ENCODE measurements at regions of chr7 and their contacts with region 1.

Region 1: GRCh38 chr7:154927624-154928143 is 75.2 kb downstream of the PAXIP1 start:
- DNase-seq: peak; percentile 88
- ATAC-seq: peak; percentile 54
- H3K4me3 ChIP-seq: peak overlapping the region; percentile 64 to 98 (median 83)
- H3K4me3 Mint-ChIP-seq: peak overlapping the region; percentile 97
- H3K27ac ChIP-seq: peak overlapping the region; percentile 83 to 94
- H3K27ac Mint-ChIP-seq: peak overlapping the region; percentile 96
- H3K4me1 ChIP-seq: peaks cover 12 to 14% of the 10 kb centered on the region in 2 donors
- H3K4me1 Mint-ChIP-seq: peaks cover 31% of the 10 kb centered on the region
- H3K27me3 ChIP-seq: no peaks in the 10 kb centered on the region
- H3K27me3 Mint-ChIP-seq: no peaks in the 10 kb centered on the region
- CTCF ChIP-seq: peak; percentile 83

Region 2: GRCh38 chr7:154913638-154914312 is 13.9 kb before region 1 on chr7:
- CTCF ChIA-PET with region 1: interaction called, 52 read pairs
- POLR2A ChIA-PET with region 1: no interaction called
- intact Hi-C with region 1: loop called (anchors 1 kb)
- DNase-seq: peak; percentile 86
- ATAC-seq: peak; percentile 97
- H3K4me3 ChIP-seq: peak overlapping the region in 4 of 5 experiments; percentile 38 to 64 (median 50)
- H3K4me3 Mint-ChIP-seq: peak overlapping the region; percentile 92
- H3K27ac ChIP-seq: no peak overlapping the region
- H3K27ac Mint-ChIP-seq: no peak overlapping the region
- H3K4me1 ChIP-seq: peaks cover 7 to 9% of the 10 kb centered on the region in 2 donors
- H3K4me1 Mint-ChIP-seq: peaks cover 5% of the 10 kb centered on the region
- H3K27me3 ChIP-seq: peaks cover 0 to 20% (median 9%) of the 10 kb centered on the region in 4 experiments
- H3K27me3 Mint-ChIP-seq: peaks cover 45% of the 10 kb centered on the region
- CTCF ChIP-seq: peak; percentile 96

Region 3: GRCh38 chr7:155003376-155004214 is 75.9 kb after region 1 on chr7:
- CTCF ChIA-PET with region 1: interaction called, 75 read pairs
- POLR2A ChIA-PET with region 1: interaction called, 5 read pairs
- intact Hi-C with region 1: loop called (anchors 1 kb)
- DNase-seq: no peak
- ATAC-seq: peak; percentile 86
- H3K4me3 ChIP-seq: peak overlapping the region; percentile 57 to 98 (median 89)
- H3K4me3 Mint-ChIP-seq: peak overlapping the region; percentile 95
- H3K27ac ChIP-seq: peak overlapping the region; percentile 58 to 80
- H3K27ac Mint-ChIP-seq: peak overlapping the region; percentile 93
- H3K4me1 ChIP-seq: peaks cover 14 to 18% of the 10 kb centered on the region in 2 donors
- H3K4me1 Mint-ChIP-seq: peaks cover 15% of the 10 kb centered on the region
- H3K27me3 ChIP-seq: no peaks in the 10 kb centered on the region
- H3K27me3 Mint-ChIP-seq: no peaks in the 10 kb centered on the region
- CTCF ChIP-seq: no peak

Region 4: GRCh38 chr7:155205368-155206317 is 278.0 kb after region 1 on chr7:
- CTCF ChIA-PET with region 1: interaction called, 12 read pairs
- POLR2A ChIA-PET with region 1: no interaction called
- intact Hi-C with region 1: loop called (anchors 1 kb)
- DNase-seq: peak; percentile 91
- ATAC-seq: peak; percentile 84
- H3K4me3 ChIP-seq: peak overlapping the region; percentile 33 to 61 (median 55)
- H3K4me3 Mint-ChIP-seq: peak overlapping the region; percentile 88
- H3K27ac ChIP-seq: peak overlapping the region; percentile 42 to 87
- H3K27ac Mint-ChIP-seq: peak overlapping the region; percentile 89
- H3K4me1 ChIP-seq: peaks cover 19 to 23% of the 10 kb centered on the region in 2 donors
- H3K4me1 Mint-ChIP-seq: peaks cover 20% of the 10 kb centered on the region
- H3K27me3 ChIP-seq: no peaks in the 10 kb centered on the region
- H3K27me3 Mint-ChIP-seq: no peaks in the 10 kb centered on the region
- CTCF ChIP-seq: no peak

Region 5: DNA sequence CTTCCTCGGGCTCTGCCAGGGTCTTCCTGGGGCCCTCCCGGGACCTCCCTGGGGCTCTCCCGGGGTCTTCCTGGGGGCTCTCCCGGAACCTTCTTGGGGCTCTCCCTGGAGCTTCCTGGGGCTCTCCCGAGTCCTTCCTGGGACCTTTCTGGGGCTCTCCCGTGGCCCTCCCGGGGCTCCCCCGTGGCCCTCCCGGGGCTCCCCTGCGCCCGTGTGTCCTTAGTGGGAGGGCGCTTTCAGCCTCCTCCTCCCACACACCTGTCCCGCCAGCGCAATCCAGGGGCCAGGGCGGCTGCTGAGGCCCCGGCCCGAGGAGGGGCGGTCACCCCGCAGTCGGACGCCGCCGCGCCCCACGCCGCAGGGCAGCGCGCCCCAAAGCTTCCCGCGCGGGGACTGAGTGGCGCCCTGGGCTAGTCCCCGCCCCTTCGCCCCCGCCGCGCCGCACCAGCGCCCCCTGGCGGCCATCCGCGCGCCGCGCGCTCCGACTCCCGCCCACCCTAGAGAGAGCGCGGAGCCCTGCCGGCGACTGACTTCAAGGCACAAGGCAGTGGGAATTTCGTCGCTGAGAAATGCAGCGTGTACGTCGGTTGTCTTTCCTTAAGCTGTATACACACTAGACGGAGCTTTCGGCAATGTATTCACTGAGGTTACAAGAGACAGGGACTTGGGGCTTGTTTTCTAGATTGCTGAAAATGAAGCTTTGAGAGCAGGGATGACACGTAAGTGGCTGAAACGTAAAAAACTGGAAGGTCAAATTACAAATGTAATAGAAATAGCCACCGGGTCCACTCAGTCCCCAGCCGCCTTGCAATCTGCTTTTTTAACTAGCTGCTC is 417.1 kb after region 1 on chr7:
- CTCF ChIA-PET with region 1: interaction called, 66 read pairs
- POLR2A ChIA-PET with region 1: no interaction called
- intact Hi-C with region 1: loop called (anchors 1 kb)
- DNase-seq: peak; percentile 88
- ATAC-seq: peak; percentile 91
- H3K4me3 ChIP-seq: peak overlapping the region in 4 of 5 experiments; percentile 25 to 58 (median 52)
- H3K4me3 Mint-ChIP-seq: peak overlapping the region; percentile 82
- H3K27ac ChIP-seq: no peak overlapping the region
- H3K27ac Mint-ChIP-seq: peak overlapping the region; percentile 71
- H3K4me1 ChIP-seq: peaks cover 12 to 13% of the 10 kb centered on the region in 2 donors
- H3K4me1 Mint-ChIP-seq: peaks cover 5% of the 10 kb centered on the region
- H3K27me3 ChIP-seq: peaks cover 0 to 26% (median 6%) of the 10 kb centered on the region in 4 experiments
- H3K27me3 Mint-ChIP-seq: peaks cover 4% of the 10 kb centered on the region
- CTCF ChIP-seq: peak; percentile 89

Region 6: GRCh38 chr7:155598810-155599210 is 671.1 kb after region 1 on chr7:
- CTCF ChIA-PET with region 1: interaction called, 17 read pairs
- POLR2A ChIA-PET with region 1: no interaction called
- intact Hi-C with region 1: loop called (anchors 5 kb)
- DNase-seq: peak; percentile 81
- ATAC-seq: peak; percentile 80
- H3K4me3 ChIP-seq: no peak overlapping the region
- H3K4me3 Mint-ChIP-seq: no peak overlapping the region
- H3K27ac ChIP-seq: no peak overlapping the region
- H3K27ac Mint-ChIP-seq: no peak overlapping the region
- H3K4me1 ChIP-seq: peaks cover 3 to 4% of the 10 kb centered on the region in 2 donors
- H3K4me1 Mint-ChIP-seq: peaks cover 3% of the 10 kb centered on the region
- H3K27me3 ChIP-seq: peaks cover 0 to 10% (median 8%) of the 10 kb centered on the region in 4 experiments
- H3K27me3 Mint-ChIP-seq: peaks cover 29% of the 10 kb centered on the region
- CTCF ChIP-seq: peak; percentile 99

Region 7: DNA sequence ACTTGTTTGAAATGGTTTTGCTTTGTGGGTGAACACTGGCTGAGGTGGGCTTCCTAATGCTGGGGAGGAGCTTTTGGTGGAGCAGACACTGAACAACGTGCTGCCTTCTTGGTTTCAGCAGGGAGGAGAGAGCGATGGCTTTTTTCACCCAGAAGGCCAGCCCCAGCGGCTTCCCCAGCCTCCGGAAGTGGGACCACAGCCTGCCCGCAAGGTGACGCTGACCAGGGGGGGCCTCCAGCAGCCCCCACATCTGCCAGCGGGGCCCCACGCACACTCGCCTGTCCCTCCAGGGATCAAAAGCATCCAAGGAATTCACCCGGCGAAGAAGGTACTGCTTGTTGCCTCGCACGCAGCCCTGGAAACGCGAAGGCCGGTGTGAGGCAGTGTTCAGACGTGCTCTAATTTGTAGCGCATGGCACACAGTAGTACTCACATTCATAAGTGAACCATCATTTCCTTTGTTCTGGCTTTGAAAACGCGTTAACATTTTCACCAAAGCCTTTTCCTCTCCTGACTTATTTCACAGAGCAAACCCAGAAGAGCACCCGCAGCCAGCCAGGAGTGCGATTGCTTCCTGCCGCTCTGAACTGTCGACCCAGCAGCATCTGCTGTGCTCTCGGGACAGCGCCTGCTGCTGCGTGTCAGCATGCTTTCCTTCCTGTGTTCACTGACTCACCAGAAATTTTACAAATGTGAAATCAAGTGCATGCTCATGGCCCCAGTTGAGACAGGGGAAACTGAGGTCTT is 836.2 kb after region 1 on chr7:
- CTCF ChIA-PET with region 1: interaction called, 13 read pairs
- POLR2A ChIA-PET with region 1: no interaction called
- intact Hi-C with region 1: loop called (anchors 1 kb)
- DNase-seq: peak; percentile 47
- ATAC-seq: peak; percentile 60
- H3K4me3 ChIP-seq: peak overlapping the region in 2 of 5 experiments; percentile 7 to 17
- H3K4me3 Mint-ChIP-seq: peak overlapping the region; percentile 78
- H3K27ac ChIP-seq: peak overlapping the region; percentile 0 to 60
- H3K27ac Mint-ChIP-seq: peak overlapping the region; percentile 74
- H3K4me1 ChIP-seq: peaks cover 18 to 20% of the 10 kb centered on the region in 2 donors
- H3K4me1 Mint-ChIP-seq: peaks cover 35% of the 10 kb centered on the region
- H3K27me3 ChIP-seq: no peaks in the 10 kb centered on the region
- H3K27me3 Mint-ChIP-seq: no peaks in the 10 kb centered on the region
- CTCF ChIP-seq: no peak

Measured in B cell (primary cell).